ENCODE measurements at regions of chr19 and their contacts with region 1.

Region 1: GRCh38 chr19:7349961-7350711 is 1.4 kb downstream of the ARHGEF18 start:
- DNase-seq: no peak
- ATAC-seq: no peak
- H3K4me3 ChIP-seq: no peak overlapping the region
- H3K27ac ChIP-seq: no peak overlapping the region
- H3K4me1 ChIP-seq: peaks cover 2 to 15% of the 10 kb centered on the region in 2 experiments; a peak in 3 of 4 replicates
- H3K27me3 ChIP-seq: no peaks in the 10 kb centered on the region
- CTCF ChIP-seq: no peak
- POLR2A ChIP-seq: no peak
- RAD21 ChIP-seq: no peak

Region 2: DNA sequence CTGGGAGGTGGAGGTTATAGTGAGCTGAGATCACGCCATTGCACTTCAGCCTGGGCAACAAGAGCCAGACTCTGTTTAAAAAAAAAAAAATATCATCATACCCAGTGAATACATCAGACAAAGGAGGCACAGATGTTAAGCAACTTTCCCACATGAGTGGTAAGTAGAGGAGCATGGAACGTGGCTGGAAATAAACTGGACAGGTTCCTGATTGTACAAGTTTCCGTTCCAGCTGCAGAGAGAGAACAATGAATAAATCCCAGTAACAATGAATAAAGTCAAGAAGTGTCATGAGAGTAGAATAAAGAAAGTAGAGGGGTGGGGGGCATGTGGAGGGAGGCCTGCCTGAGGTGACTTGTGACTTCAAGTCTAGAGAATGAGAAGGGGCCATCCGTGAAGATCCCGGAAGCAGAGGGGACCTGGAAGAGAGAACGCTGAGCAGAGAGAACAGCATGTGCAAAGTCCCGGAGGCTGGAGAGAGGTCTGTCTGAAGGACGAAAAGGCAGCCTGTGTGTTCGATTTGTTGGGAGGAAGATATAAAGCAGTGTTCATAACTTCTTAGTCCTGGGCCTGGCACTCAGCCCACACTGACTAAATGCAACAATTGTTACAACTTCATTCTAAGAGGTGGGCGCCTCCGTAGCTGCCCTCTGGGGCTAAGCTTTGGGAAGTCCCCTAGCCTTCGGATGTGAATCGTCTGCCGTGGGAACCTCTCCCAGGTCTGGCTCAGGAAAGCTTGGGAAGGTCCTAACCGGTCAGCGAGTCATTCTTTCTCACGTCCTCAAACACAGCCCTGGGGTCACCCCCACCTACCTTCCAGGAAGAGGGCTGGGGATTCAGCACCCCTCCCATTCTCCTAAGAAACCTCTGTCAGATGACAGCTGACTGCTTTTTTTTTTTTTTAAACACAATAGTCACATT is 16.7 kb before region 1 on chr19:
- CTCF ChIA-PET with region 1: no interaction called
- POLR2A ChIA-PET with region 1: no interaction called
- RAD21 ChIA-PET with region 1: no interaction called
- intact Hi-C with region 1: no loop called
- DNase-seq: no peak
- ATAC-seq: no peak
- H3K4me3 ChIP-seq: no peak overlapping the region
- H3K27ac ChIP-seq: no peak overlapping the region
- H3K4me1 ChIP-seq: no peaks in the 10 kb centered on the region
- H3K27me3 ChIP-seq: no peaks in the 10 kb centered on the region
- CTCF ChIP-seq: no peak
- POLR2A ChIP-seq: no peak
- RAD21 ChIP-seq: no peak

Region 3: DNA sequence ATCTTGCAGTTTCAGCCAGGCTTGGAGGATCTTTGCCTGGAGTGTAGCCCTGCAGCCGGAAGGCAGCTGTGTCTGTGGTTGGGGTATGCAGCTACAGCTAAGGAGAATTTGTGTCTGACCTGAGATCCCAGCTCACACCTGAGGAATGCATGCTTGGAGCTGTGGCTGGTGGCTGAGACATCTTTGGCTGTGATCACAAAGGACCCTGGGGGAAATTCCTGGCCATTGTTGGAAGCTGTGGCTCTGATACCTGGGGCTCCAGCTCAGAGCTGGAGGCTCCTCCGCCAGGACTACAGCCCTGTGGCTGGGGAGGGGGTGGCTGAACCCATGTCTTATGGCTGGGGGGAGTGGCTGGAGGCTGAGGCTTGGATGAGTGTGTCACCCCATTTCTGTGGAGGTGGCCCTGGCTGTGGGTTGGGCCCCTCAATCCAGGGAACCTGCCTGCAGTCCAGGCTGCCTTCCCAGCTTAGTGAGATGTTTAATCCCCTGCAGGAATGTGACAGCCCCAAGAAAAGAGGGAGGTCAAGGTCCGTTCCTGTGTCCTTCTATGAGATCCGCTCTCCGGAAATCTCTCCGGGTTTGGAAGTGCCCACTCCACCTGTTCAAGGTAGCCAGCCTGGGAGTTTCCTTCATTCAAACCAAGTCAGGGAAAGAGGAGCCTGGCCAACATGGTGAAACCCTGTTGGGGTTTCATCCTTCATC is 26.2 kb after region 1 on chr19:
- CTCF ChIA-PET with region 1: interaction called, 20 read pairs
- POLR2A ChIA-PET with region 1: interaction called, 3 read pairs
- RAD21 ChIA-PET with region 1: interaction called, 3 to 8 read pairs
- intact Hi-C with region 1: loop called (anchors 1 kb)
- DNase-seq: no peak
- ATAC-seq: no peak
- H3K4me3 ChIP-seq: no peak overlapping the region
- H3K27ac ChIP-seq: no peak overlapping the region
- H3K4me1 ChIP-seq: peaks cover 6 to 13% of the 10 kb centered on the region in 2 experiments; a peak in 3 of 4 replicates
- H3K27me3 ChIP-seq: no peaks in the 10 kb centered on the region
- CTCF ChIP-seq: no peak
- POLR2A ChIP-seq: no peak
- RAD21 ChIP-seq: no peak

Region 4: GRCh38 chr19:7450243-7451223 is 100.4 kb after region 1 on chr19:
- CTCF ChIA-PET with region 1: no interaction called
- POLR2A ChIA-PET with region 1: no interaction called
- RAD21 ChIA-PET with region 1: no interaction called
- intact Hi-C with region 1: no loop called
- DNase-seq: peak; percentile 10
- ATAC-seq: no peak
- H3K4me3 ChIP-seq: no peak overlapping the region
- H3K27ac ChIP-seq: no peak overlapping the region
- H3K4me1 ChIP-seq: no peaks in the 10 kb centered on the region
- H3K27me3 ChIP-seq: no peaks in the 10 kb centered on the region
- CTCF ChIP-seq: no peak
- POLR2A ChIP-seq: no peak
- RAD21 ChIP-seq: no peak

Region 5: DNA sequence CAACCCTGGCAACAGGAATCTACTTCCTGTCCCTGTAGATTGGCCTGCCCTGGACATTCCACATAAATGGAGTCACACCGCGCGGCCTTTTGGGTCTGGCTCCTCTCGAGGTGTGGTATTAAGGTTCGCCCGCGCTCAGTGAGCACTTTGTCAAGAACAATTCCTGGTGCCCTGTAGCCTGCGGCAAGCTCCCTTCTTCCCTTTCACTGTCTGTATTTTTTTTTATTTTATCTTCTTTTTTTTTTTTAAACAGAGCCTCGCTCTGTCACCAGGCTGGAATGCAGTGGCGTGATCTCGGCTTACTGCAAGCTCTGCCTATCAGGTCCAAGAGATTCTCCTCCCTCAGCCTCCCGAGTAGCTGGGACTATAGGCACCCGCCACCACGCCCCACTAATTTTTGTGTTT is 110.4 kb after region 1 on chr19:
- CTCF ChIA-PET with region 1: no interaction called
- POLR2A ChIA-PET with region 1: no interaction called
- RAD21 ChIA-PET with region 1: no interaction called
- intact Hi-C with region 1: no loop called
- DNase-seq: no peak
- ATAC-seq: peak; percentile 65; the same call in 1 of the 2 replicates
- H3K4me3 ChIP-seq: no peak overlapping the region
- H3K27ac ChIP-seq: no peak overlapping the region
- H3K4me1 ChIP-seq: peaks cover 0 to 19% of the 10 kb centered on the region in 2 experiments; a peak in 2 of 4 replicates
- H3K27me3 ChIP-seq: no peaks in the 10 kb centered on the region
- CTCF ChIP-seq: no peak
- POLR2A ChIP-seq: no peak
- RAD21 ChIP-seq: no peak